Naive thymus-derived CD4-positive, alpha-beta T cell (primary cell): ENCODE measurements at regions of chr17 and their contacts with region 1.

Region 1: DNA sequence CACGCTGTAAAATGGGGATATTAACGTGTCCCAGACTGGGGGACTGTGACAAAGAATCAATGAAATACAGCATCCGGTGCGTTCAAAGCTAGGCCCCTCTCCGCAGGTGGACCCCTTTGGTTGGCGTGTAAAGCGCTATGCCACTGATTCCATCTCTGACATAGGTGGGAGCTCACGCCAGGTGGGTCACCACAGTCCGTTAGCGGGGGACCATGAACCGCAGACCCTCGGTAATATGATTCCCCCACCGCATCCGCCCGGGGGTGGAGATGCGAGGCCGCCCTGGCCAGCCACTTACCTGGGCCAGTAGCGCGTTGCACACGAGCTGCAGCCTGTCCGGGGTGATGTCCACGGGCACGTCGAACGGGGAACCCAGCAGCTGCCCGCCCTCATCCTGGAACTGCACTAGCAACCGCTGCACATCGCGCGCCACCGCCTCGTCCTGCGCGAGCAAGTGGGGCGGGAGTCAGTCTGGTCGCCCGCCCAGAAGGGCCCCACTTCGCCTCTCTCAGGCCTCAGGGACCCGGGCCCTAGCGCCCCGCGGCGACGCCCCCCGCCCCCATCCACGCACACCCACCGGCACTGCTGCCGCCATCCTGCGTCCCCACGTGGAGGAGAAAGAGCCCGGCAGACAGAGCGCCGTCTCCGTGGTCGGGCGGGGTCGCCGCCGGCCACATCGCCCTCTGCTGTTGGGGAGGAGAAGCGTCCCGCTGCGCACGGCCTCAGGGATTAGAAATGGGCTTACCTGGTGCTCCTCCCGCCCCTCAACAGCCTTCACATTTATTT is at the start of gene NLE1:
- DNase-seq: peak; percentile 79 to 94 (median 89)
- ATAC-seq: peak; percentile 100
- H3K4me3 ChIP-seq: peak within 1 kb of the TSS; percentile 79
- H3K4me3 Mint-ChIP-seq: peak within 1 kb of the TSS; percentile 77 to 88 (median 86)
- H3K27ac ChIP-seq: peak within 1 kb of the TSS; percentile 81
- H3K27ac Mint-ChIP-seq: peak within 1 kb of the TSS; percentile 66 to 90 (median 87)
- H3K4me1 ChIP-seq: peaks cover 6 to 13% of the 10 kb centered on the region in 2 donors
- H3K4me1 Mint-ChIP-seq: peaks cover 7 to 30% (median 21%) of the 10 kb centered on the region in 7 donors
- H3K27me3 ChIP-seq: no peaks in the 10 kb centered on the region
- H3K27me3 Mint-ChIP-seq: no peaks in the 10 kb centered on the region
- total RNA-seq, gene NLE1: 10.0 to 29.4 (median 21.8) TPM

Region 2: GRCh38 chr17:34840750-34841149 is 301.1 kb before region 1 on chr17:
- CTCF ChIA-PET with region 1: no interaction called
- POLR2A ChIA-PET with region 1: no interaction called
- intact Hi-C with region 1: no loop called
- DNase-seq: peak in 7 of 9 donors; percentile 25 to 64 (median 61)
- ATAC-seq: peak; percentile 61
- H3K4me3 ChIP-seq: peak overlapping the region; percentile 17
- H3K4me3 Mint-ChIP-seq: peak overlapping the region in 7 of 10 donors; percentile 22 to 70 (median 52)
- H3K27ac ChIP-seq: peak overlapping the region; percentile 30
- H3K27ac Mint-ChIP-seq: peak overlapping the region in 7 of 9 donors; percentile 81 to 94 (median 89)
- H3K4me1 ChIP-seq: peaks cover 4 to 51% of the 10 kb centered on the region in 2 donors
- H3K4me1 Mint-ChIP-seq: peaks cover 0 to 21% (median 6%) of the 10 kb centered on the region in 7 donors
- H3K27me3 ChIP-seq: no peaks in the 10 kb centered on the region
- H3K27me3 Mint-ChIP-seq: peaks cover 0 to 6% (median 0%) of the 10 kb centered on the region in 5 donors

Region 3: DNA sequence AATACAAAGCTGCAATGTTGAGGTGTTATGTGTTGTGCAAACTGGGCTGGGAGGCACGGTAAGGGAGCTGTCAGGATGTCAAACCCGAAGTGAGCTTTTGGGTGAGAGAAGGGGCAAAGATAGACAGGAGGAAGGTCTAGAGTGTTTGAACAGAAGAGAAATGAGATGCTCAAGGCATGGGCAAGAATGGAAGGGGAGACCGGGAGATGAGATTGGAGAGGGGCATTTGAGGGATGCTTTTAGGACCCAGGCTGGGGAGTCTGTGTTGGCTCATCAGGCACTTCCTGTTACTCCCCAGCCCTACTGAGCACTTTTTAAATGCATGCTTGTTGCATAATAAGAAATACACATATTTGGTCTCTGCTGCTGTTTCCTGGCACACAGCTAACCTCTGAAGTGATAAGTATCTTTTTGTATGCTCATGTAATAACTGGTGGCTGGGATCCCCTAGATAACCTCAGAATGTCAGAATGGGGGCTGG is 19.4 kb after region 1 on chr17:
- CTCF ChIA-PET with region 1: interaction called, 11 read pairs
- POLR2A ChIA-PET with region 1: interaction called, 20 read pairs
- intact Hi-C with region 1: loop called in 1 of 2 experiments (anchors 1 kb)
- DNase-seq: peak in 7 of 9 donors; percentile 31 to 68 (median 55)
- ATAC-seq: peak; percentile 77
- H3K4me3 ChIP-seq: peak overlapping the region; percentile 30
- H3K4me3 Mint-ChIP-seq: peak overlapping the region; percentile 41 to 83 (median 72)
- H3K27ac ChIP-seq: peak overlapping the region; percentile 75
- H3K27ac Mint-ChIP-seq: peak overlapping the region; percentile 65 to 96 (median 90)
- H3K4me1 ChIP-seq: peaks cover 40 to 52% of the 10 kb centered on the region in 2 donors
- H3K4me1 Mint-ChIP-seq: peaks cover 34 to 76% (median 70%) of the 10 kb centered on the region in 7 donors
- H3K27me3 ChIP-seq: no peaks in the 10 kb centered on the region
- H3K27me3 Mint-ChIP-seq: peaks cover 0 to 11% (median 0%) of the 10 kb centered on the region in 5 donors

Region 4: GRCh38 chr17:35432176-35433074 is 290.6 kb after region 1 on chr17 and contains the start of gene SLFN12:
- CTCF ChIA-PET with region 1: no interaction called
- POLR2A ChIA-PET with region 1: no interaction called
- intact Hi-C with region 1: loop called in 1 of 2 experiments (anchors 2 kb)
- DNase-seq: peak in 8 of 9 donors; percentile 31 to 75 (median 70)
- ATAC-seq: peak; percentile 95
- H3K4me3 ChIP-seq: peak within 1 kb of the TSS; percentile 70
- H3K4me3 Mint-ChIP-seq: peak within 1 kb of the TSS; percentile 86 to 100 (median 96)
- H3K27ac ChIP-seq: peak within 1 kb of the TSS; percentile 63
- H3K27ac Mint-ChIP-seq: peak within 1 kb of the TSS; percentile 82 to 94 (median 91)
- H3K4me1 ChIP-seq: peaks cover 16 to 28% of the 10 kb centered on the region in 2 donors
- H3K4me1 Mint-ChIP-seq: peaks cover 36 to 65% (median 59%) of the 10 kb centered on the region in 7 donors
- H3K27me3 ChIP-seq: no peaks in the 10 kb centered on the region
- H3K27me3 Mint-ChIP-seq: no peaks in the 10 kb centered on the region
- total RNA-seq, gene SLFN12: 4.2 to 14.9 (median 6.5) TPM

Region 5: DNA sequence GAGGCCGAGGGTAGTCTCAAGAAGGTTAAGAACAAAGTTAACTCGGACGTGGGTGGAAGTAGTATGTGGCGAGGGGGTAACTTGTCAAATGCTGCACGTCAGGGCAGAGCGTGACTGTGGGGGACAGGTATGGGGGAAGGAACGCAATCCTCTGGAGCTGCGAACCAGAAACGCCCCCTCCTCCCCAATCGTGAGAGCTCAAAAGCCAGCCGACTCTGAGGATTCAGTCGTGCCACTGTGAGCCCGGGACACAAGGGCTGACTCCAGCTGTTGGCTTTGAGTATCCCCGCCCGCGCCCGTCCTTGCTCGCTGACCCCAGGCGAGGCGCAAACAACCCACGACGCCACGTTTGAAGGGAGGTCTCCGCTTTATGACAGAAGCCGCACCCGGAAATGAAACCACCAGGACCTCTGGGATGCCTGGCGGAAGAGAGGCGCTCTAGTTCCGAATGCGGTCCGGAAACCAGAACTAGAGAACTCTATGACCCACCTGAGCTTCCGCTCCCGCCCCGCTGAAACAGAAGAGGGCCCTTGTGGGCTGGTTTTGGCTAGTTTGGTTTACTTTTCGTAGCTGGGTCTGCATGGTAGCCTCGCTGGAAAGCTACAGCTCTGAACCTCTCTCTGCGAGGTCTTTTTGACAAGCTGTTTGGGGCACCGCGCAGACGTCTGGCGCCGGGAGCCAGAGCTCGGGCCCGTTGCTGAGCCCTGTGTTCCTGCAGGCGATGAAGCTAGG is 436.5 kb after region 1 on chr17 and contains the start of gene PEX12:
- CTCF ChIA-PET with region 1: no interaction called
- POLR2A ChIA-PET with region 1: interaction called, 11 read pairs
- intact Hi-C with region 1: loop called (anchors 1 kb)
- DNase-seq: peak; percentile 62 to 94 (median 89)
- ATAC-seq: peak; percentile 99
- H3K4me3 ChIP-seq: peak within 1 kb of the TSS; percentile 86
- H3K4me3 Mint-ChIP-seq: peak within 1 kb of the TSS; percentile 92 to 100 (median 97)
- H3K27ac ChIP-seq: peak within 1 kb of the TSS; percentile 92
- H3K27ac Mint-ChIP-seq: peak within 1 kb of the TSS; percentile 96 to 100 (median 99)
- H3K4me1 ChIP-seq: peaks cover 5 to 12% of the 10 kb centered on the region in 2 donors
- H3K4me1 Mint-ChIP-seq: peaks cover 6 to 40% (median 32%) of the 10 kb centered on the region in 7 donors
- H3K27me3 ChIP-seq: no peaks in the 10 kb centered on the region
- H3K27me3 Mint-ChIP-seq: peaks cover 0 to 2% (median 0%) of the 10 kb centered on the region in 5 donors
- total RNA-seq, gene PEX12: 2.9 to 8.0 (median 5.3) TPM